CD8-positive, alpha-beta memory T cell (primary cell): ENCODE measurements at regions of chr12 and their contacts with region 1.

Region 1: DNA sequence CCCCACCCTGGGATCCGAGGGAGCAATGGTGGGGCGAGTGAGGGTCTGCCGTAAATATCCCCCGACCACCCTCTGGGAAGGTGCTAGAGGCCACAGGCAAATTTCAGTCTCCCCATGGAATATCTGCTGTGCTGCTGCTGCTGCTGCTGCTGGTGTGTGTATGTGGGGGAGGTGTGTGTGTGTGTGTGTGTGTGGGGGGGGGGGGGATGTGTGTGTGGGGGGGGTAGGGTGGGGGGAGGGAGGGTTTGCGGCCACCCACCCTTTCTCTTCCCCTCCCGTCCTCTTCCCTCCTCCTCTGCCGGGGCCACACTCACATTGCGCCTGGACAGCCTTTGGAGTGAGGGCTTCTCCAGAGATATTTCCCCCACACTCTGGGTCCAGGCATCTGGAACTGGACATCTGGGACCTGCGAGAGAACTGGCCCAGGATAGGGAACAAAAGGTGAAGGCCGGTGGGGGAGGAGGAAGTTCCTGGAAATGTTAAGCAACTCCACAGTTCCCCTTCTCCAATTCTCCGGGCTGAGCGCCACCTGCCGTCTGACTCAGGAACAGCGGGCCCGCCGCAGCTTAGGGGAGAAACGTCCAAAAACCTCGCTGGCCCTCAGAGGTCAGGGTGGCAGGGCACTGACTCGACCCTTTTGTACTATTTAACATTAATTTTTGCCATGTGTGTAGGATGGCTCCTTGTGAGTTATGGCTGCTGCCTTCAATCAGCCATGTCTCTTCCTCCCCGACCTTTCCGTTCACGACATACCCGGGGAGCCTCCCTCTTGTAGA is at the start of gene C1RL:
- DNase-seq: peak; percentile 62 to 83 (median 76)
- H3K4me3 ChIP-seq: peak within 1 kb of the TSS; percentile 96
- H3K4me3 Mint-ChIP-seq: peak within 1 kb of the TSS; percentile 93 to 99 (median 95)
- H3K27ac ChIP-seq: peak within 1 kb of the TSS; percentile 75
- H3K27ac Mint-ChIP-seq: peak within 1 kb of the TSS; percentile 86 to 97 (median 94)
- H3K4me1 ChIP-seq: peaks cover 25% of the 10 kb centered on the region
- H3K4me1 Mint-ChIP-seq: peaks cover 46 to 57% (median 52%) of the 10 kb centered on the region in 3 donors
- H3K27me3 ChIP-seq: no peaks in the 10 kb centered on the region
- H3K27me3 Mint-ChIP-seq: peaks cover 0 to 2% of the 10 kb centered on the region in 2 donors
- total RNA-seq, gene C1RL: 12.7 to 14.2 TPM

Region 2: GRCh38 chr12:6867413-6868210 is 241.4 kb before region 1 on chr12 and contains the start of gene TPI1:
- CTCF ChIA-PET with region 1: interaction called, 64 read pairs
- POLR2A ChIA-PET with region 1: interaction called, 4 read pairs
- DNase-seq: peak; percentile 62 to 85 (median 73)
- H3K4me3 ChIP-seq: peak within 1 kb of the TSS; percentile 58
- H3K4me3 Mint-ChIP-seq: peak within 1 kb of the TSS; percentile 87 to 98 (median 92)
- H3K27ac ChIP-seq: peak within 1 kb of the TSS; percentile 76
- H3K27ac Mint-ChIP-seq: peak within 1 kb of the TSS; percentile 85 to 96 (median 92)
- H3K4me1 ChIP-seq: peaks cover 38% of the 10 kb centered on the region
- H3K4me1 Mint-ChIP-seq: peaks cover 43 to 55% (median 47%) of the 10 kb centered on the region in 3 donors
- H3K27me3 ChIP-seq: no peaks in the 10 kb centered on the region
- H3K27me3 Mint-ChIP-seq: no peaks in the 10 kb centered on the region
- total RNA-seq, gene TPI1: 1,331 to 1,374 TPM

Region 3: GRCh38 chr12:7092229-7092985 is 16.6 kb before region 1 on chr12 and contains the start of gene C1R:
- CTCF ChIA-PET with region 1: interaction called, 27 read pairs
- POLR2A ChIA-PET with region 1: interaction called, 3 read pairs
- DNase-seq: peak; percentile 54 to 77 (median 61)
- H3K4me3 ChIP-seq: peak within 1 kb of the TSS; percentile 61
- H3K4me3 Mint-ChIP-seq: peak within 1 kb of the TSS; percentile 70 to 94 (median 86)
- H3K27ac ChIP-seq: no peak within 1 kb of the TSS
- H3K27ac Mint-ChIP-seq: peak within 1 kb of the TSS; percentile 50 to 94 (median 64)
- H3K4me1 ChIP-seq: peaks cover 12% of the 10 kb centered on the region
- H3K4me1 Mint-ChIP-seq: peaks cover 6 to 11% (median 9%) of the 10 kb centered on the region in 3 donors
- H3K27me3 ChIP-seq: no peaks in the 10 kb centered on the region
- H3K27me3 Mint-ChIP-seq: peaks cover 2 to 6% of the 10 kb centered on the region in 2 donors
- total RNA-seq, gene C1R: 1.2 to 1.7 TPM

Region 4: GRCh38 chr12:7176595-7176994 is 67.6 kb after region 1 on chr12:
- CTCF ChIA-PET with region 1: no interaction called
- POLR2A ChIA-PET with region 1: no interaction called
- DNase-seq: no peak
- H3K4me3 ChIP-seq: no peak overlapping the region
- H3K4me3 Mint-ChIP-seq: no peak overlapping the region
- H3K27ac ChIP-seq: no peak overlapping the region
- H3K27ac Mint-ChIP-seq: no peak overlapping the region
- H3K4me1 ChIP-seq: no peaks in the 10 kb centered on the region
- H3K4me1 Mint-ChIP-seq: no peaks in the 10 kb centered on the region
- H3K27me3 ChIP-seq: peaks cover 10% of the 10 kb centered on the region
- H3K27me3 Mint-ChIP-seq: peaks cover 23 to 68% of the 10 kb centered on the region in 2 donors

Region 5: DNA sequence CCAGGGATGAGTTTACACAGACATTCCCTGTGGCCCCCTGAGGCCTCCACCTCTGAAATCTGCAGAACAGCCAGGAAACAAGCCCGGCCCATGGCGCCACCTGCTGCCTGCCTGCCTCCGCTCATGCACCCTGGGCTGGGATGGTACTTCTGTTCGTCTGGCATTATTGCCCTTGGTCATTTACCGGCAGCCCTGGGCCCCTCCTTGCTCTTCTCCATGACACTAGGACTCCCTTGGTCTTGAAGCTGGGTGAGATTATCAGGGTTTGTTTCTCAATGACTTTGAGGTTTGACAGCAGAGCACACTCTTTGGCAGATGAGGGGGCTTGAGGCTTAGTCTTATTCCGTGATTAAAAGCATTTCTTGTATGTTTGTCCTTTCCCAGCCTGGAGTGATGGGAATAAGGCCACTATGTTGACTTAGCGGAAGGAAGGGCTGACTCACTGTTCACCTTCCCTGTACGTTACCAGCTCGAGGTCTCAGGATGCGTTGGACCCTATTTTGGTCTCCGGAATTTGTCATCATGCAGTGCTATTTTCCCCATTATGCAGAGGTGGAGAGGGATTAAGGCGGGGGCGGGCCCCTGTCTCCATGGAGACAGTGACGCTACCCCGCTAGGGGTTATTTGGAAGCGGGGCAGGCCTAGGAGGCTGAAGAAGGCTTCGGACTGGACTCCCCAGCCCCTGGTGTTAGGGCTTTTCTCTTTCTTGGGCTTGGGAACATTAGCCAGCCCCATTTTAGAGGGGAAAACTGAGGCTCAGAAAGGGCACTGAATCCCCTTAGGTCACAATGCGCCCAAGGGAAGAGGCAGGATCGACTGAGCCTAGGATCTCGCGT is 79.8 kb after region 1 on chr12:
- CTCF ChIA-PET with region 1: no interaction called
- POLR2A ChIA-PET with region 1: no interaction called
- DNase-seq: peak; percentile 38 to 68 (median 44)
- H3K4me3 ChIP-seq: peak overlapping the region; percentile 94
- H3K4me3 Mint-ChIP-seq: peak overlapping the region; percentile 92 to 97 (median 96)
- H3K27ac ChIP-seq: peak overlapping the region; percentile 82
- H3K27ac Mint-ChIP-seq: peak overlapping the region; percentile 86 to 99 (median 98)
- H3K4me1 ChIP-seq: peaks cover 33% of the 10 kb centered on the region
- H3K4me1 Mint-ChIP-seq: peaks cover 36 to 45% (median 42%) of the 10 kb centered on the region in 3 donors
- H3K27me3 ChIP-seq: no peaks in the 10 kb centered on the region
- H3K27me3 Mint-ChIP-seq: no peaks in the 10 kb centered on the region

Region 6: GRCh38 chr12:7259060-7259459 is 150.1 kb after region 1 on chr12:
- CTCF ChIA-PET with region 1: no interaction called
- POLR2A ChIA-PET with region 1: no interaction called
- DNase-seq: no peak
- H3K4me3 ChIP-seq: no peak overlapping the region
- H3K4me3 Mint-ChIP-seq: no peak overlapping the region
- H3K27ac ChIP-seq: no peak overlapping the region
- H3K27ac Mint-ChIP-seq: no peak overlapping the region
- H3K4me1 ChIP-seq: no peaks in the 10 kb centered on the region
- H3K4me1 Mint-ChIP-seq: no peaks in the 10 kb centered on the region
- H3K27me3 ChIP-seq: no peaks in the 10 kb centered on the region
- H3K27me3 Mint-ChIP-seq: peaks cover 6 to 10% of the 10 kb centered on the region in 2 donors